OCI-LY7 (cell line): ENCODE measurements at regions of chr14 and their contacts with region 1.

Region 1: GRCh38 chr14:87034680-87035079 is 958.3 kb downstream of the GALC start:
- DNase-seq: no peak
- H3K4me3 ChIP-seq: no peak overlapping the region
- H3K27ac ChIP-seq: peak overlapping the region; percentile 14
- H3K4me1 ChIP-seq: peaks cover 18% of the 10 kb centered on the region
- CTCF ChIP-seq: no peak

Region 2: DNA sequence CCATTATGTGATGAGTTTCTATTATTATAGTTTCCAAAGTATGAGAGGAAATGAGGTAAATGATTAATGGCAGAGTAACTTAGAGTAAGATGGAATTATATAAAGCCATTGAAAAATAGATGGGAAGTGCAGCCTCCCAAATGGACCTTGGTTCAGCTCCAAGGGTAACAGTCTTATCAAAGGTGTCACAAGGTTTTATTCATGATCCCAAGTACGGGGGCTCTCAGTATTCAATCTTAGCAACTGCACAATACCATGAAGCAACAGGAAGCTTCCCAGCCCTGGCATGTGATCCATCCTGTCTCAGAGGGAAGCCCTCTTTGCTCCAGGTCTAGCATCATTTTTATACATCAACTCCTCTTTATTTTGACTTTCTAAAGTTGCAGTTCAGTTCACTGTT is 10.1 kb after region 1 on chr14:
- CTCF ChIA-PET with region 1: interaction called, 3 read pairs
- POLR2A ChIA-PET with region 1: interaction called, 21 read pairs
- intact Hi-C with region 1: no loop called
- DNase-seq: no peak
- H3K4me3 ChIP-seq: no peak overlapping the region
- H3K27ac ChIP-seq: no peak overlapping the region
- H3K4me1 ChIP-seq: peaks cover 36% of the 10 kb centered on the region
- CTCF ChIP-seq: no peak

Region 3: GRCh38 chr14:87049950-87050349 is 15.3 kb after region 1 on chr14:
- CTCF ChIA-PET with region 1: interaction called, 3 read pairs
- POLR2A ChIA-PET with region 1: interaction called, 21 read pairs
- intact Hi-C with region 1: no loop called
- DNase-seq: peak; percentile 67
- H3K4me3 ChIP-seq: no peak overlapping the region
- H3K27ac ChIP-seq: peak overlapping the region; percentile 1
- H3K4me1 ChIP-seq: peaks cover 29% of the 10 kb centered on the region
- CTCF ChIP-seq: peak; percentile 86